A673 (cell line): ENCODE measurements at regions of chr1 and their contacts with region 1.

Region 1: GRCh38 chr1:43358746-43359693 is at the start of gene CDC20:
- DNase-seq: peak; percentile 100
- H3K4me3 ChIP-seq: peak within 1 kb of the TSS; percentile 78
- H3K27ac ChIP-seq: peak within 1 kb of the TSS; percentile 81
- H3K4me1 ChIP-seq: peaks cover 20% of the 10 kb centered on the region
- H3K27me3 ChIP-seq: no peaks in the 10 kb centered on the region
- CTCF ChIP-seq: no peak
- total RNA-seq, gene CDC20: 296 and 309 TPM in 2 replicates

Region 2: DNA sequence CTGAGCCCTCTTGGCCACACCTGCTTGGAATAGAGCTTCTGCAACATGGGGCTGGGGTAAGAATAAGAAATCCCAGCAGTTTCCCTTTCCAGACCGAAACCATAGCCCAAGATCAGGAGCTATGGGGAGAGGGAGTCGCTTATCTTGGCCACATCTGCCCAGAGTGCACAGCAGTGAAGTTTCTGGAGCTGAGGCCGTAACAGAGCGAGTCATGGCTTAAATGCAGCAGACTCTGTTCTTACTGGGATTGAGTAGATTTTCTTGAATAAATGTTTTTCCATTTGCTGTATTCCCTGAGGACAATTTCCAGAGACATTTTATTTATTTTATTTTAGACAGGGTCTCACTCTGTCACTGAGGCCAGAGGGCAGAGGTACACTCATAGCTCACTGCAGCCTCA is 153.3 kb before region 1 on chr1:
- CTCF ChIA-PET with region 1: no interaction called
- POLR2A ChIA-PET with region 1: interaction called, 15 read pairs
- intact Hi-C with region 1: no loop called
- DNase-seq: no peak
- H3K4me3 ChIP-seq: no peak overlapping the region
- H3K27ac ChIP-seq: peak overlapping the region; percentile 97
- H3K4me1 ChIP-seq: peaks cover 33% of the 10 kb centered on the region
- H3K27me3 ChIP-seq: no peaks in the 10 kb centered on the region
- CTCF ChIP-seq: no peak

Region 3: DNA sequence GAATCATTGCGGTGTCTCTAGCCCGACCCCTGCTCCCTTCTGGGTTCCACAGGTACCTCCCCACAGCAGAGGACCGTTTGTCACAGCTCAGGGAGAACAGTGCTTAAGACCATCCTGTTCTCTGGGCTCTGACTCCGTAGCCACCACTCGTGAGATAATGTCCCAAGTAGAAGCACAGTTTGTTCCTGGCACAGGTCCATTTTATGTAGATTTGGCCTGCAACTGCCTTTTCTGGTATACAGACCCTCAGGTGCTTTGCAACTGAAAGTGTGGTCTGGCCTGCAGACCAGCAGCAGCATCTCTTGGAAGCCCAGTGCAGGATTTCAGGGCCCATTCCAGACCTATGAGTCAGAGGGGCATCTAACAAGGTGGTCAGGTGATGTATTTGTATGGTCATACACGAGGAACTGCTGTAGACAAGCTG is 117.6 kb before region 1 on chr1:
- CTCF ChIA-PET with region 1: interaction called, 3 read pairs
- POLR2A ChIA-PET with region 1: no interaction called
- intact Hi-C with region 1: loop called (anchors 10 kb)
- DNase-seq: no peak
- H3K4me3 ChIP-seq: no peak overlapping the region
- H3K27ac ChIP-seq: no peak overlapping the region
- H3K4me1 ChIP-seq: no peaks in the 10 kb centered on the region
- H3K27me3 ChIP-seq: no peaks in the 10 kb centered on the region
- CTCF ChIP-seq: no peak